ENCODE measurements at regions of chr7 and their contacts with region 1.

Region 1: DNA sequence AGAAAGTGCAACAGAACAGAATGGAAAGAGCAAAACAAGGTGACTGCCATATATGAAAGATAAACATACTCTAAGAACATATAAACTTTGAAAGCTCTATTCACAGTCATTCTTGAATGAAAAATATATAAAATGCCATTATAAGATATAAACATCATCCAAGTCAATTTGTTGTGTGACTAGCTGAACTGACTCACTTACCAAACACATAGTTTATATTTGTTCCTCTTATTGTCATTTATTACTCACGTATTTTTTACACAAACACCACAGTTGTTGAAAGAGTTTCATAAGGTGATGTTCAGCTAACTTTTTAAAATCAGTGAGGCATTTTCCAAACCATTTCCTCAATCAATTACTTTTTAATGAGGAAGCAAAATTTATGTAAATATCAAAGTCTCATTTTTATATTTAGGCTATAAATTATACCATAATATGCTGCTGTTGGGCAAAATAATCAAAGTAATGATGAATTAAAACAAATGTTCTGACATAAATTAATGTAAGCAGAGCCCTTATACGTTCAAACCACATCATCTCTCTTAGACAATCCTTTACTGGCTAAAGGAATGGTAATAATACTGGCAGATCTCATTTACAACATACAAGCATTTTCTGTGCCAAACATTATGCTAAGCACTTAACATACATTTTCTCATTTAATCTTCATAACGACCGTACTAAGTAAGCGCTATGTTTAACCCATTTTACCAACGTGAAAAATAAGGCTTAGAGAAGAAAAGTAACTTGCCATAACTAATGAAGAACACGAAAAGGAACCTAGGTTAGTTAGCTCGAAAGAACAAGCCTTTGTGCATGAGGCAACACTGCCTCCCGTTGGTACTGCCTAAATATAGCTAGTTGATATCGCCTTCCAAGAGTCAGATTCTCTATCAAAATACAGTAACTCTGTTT is 7.3 kb downstream of the LRRN3 start:
- DNase-seq: peak; percentile 10 to 11
- ATAC-seq: peak in 6 of 8 donors; percentile 52 to 74 (median 64)
- H3K4me3 ChIP-seq: no peak overlapping the region
- H3K27ac ChIP-seq: no peak overlapping the region
- H3K4me1 ChIP-seq: peaks cover 0 to 7% (median 0%) of the 10 kb centered on the region in 9 donors
- H3K27me3 ChIP-seq: no peaks in the 10 kb centered on the region
- CTCF ChIP-seq: peak; percentile 46 to 81 (median 70)

Region 2: DNA sequence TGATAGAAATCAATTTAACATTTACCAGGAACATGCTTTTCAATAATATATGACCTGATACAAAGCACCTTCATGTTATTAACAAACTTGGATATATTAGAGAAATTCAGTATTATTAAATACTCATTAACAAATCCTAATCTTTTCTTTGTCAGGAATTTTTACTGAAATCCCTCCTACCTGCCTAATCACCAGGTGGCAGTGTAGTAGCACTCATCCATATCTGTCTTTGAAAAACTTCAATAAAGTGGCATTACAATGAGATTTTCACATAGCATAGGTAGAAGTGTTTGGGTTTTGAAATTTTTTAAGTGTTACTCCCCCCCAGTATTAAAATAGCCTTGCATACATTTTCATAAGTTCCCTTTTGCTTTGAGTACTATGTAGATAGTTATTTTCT is 1253.9 kb before region 1 on chr7:
- intact Hi-C with region 1: loop called in 1 of 10 experiments (anchors 10 kb)
- DNase-seq: no peak
- ATAC-seq: no peak
- H3K4me3 ChIP-seq: no peak overlapping the region
- H3K27ac ChIP-seq: no peak overlapping the region
- H3K4me1 ChIP-seq: no peaks in the 10 kb centered on the region
- H3K27me3 ChIP-seq: no peaks in the 10 kb centered on the region
- CTCF ChIP-seq: peak in 6 of 9 donors; percentile 24 to 53 (median 34)

Region 3: DNA sequence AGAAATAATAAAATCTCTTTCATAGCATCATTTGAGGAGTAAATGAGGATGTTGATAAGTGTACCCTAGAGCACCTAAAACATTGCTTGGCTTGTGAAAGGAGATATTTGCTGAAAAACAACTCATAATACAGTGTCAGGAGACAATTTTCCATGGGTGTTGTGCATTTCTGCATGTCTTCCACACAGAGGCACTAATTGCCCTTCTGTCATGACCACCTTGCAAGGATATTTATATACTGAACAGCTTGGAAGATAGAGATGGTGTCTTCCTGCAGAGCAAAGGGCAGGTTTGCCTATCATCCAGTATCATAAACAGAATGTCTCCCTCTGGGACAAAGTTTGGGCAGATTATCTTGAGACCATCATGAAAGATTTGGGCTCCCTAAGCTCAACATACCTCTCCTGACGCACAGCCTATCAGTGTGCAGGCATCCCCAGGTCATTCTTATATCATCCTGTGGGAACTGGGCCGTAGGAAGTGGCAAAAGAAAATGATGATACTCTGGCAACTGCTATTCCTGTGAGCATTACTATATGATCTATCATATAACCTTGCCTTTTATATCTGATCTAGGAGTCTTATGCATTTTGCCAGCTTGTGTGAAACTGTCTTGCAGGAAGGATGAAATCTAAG is 502.5 kb before region 1 on chr7:
- intact Hi-C with region 1: loop called in 1 of 10 experiments (anchors 5 kb)
- DNase-seq: no peak
- ATAC-seq: no peak
- H3K4me3 ChIP-seq: no peak overlapping the region
- H3K27ac ChIP-seq: no peak overlapping the region
- H3K4me1 ChIP-seq: no peaks in the 10 kb centered on the region
- H3K27me3 ChIP-seq: no peaks in the 10 kb centered on the region
- CTCF ChIP-seq: peak in 4 of 9 donors; percentile 7 to 25 (median 13)

Region 4: GRCh38 chr7:111029574-111030251 is 68.6 kb before region 1 on chr7:
- intact Hi-C with region 1: loop called in 1 of 10 experiments (anchors 10 kb)
- DNase-seq: peak in 1 of 2 donors; percentile 21
- ATAC-seq: no peak
- H3K4me3 ChIP-seq: no peak overlapping the region
- H3K27ac ChIP-seq: no peak overlapping the region
- H3K4me1 ChIP-seq: peaks cover 0 to 16% (median 8%) of the 10 kb centered on the region in 9 donors
- H3K27me3 ChIP-seq: no peaks in the 10 kb centered on the region
- CTCF ChIP-seq: no peak

Region 5: GRCh38 chr7:111232249-111233084 is 134.2 kb after region 1 on chr7:
- intact Hi-C with region 1: no loop called
- DNase-seq: no peak
- ATAC-seq: no peak
- H3K4me3 ChIP-seq: no peak overlapping the region
- H3K27ac ChIP-seq: peak overlapping the region in 1 of 10 donors; percentile 28
- H3K4me1 ChIP-seq: peaks cover 0 to 11% (median 0%) of the 10 kb centered on the region in 9 donors
- H3K27me3 ChIP-seq: no peaks in the 10 kb centered on the region
- CTCF ChIP-seq: no peak

Region 6: GRCh38 chr7:111486472-111487142 is 388.3 kb after region 1 on chr7:
- intact Hi-C with region 1: loop called in 5 of 10 experiments (anchors 5 to 10 kb)
- DNase-seq: peak in 1 of 2 donors; percentile 13
- ATAC-seq: peak in 5 of 8 donors; percentile 41 to 69 (median 56)
- H3K4me3 ChIP-seq: no peak overlapping the region
- H3K27ac ChIP-seq: no peak overlapping the region
- H3K4me1 ChIP-seq: peaks cover 0 to 4% (median 0%) of the 10 kb centered on the region in 9 donors
- H3K27me3 ChIP-seq: no peaks in the 10 kb centered on the region
- CTCF ChIP-seq: peak; percentile 23 to 87 (median 76)

Region 7: DNA sequence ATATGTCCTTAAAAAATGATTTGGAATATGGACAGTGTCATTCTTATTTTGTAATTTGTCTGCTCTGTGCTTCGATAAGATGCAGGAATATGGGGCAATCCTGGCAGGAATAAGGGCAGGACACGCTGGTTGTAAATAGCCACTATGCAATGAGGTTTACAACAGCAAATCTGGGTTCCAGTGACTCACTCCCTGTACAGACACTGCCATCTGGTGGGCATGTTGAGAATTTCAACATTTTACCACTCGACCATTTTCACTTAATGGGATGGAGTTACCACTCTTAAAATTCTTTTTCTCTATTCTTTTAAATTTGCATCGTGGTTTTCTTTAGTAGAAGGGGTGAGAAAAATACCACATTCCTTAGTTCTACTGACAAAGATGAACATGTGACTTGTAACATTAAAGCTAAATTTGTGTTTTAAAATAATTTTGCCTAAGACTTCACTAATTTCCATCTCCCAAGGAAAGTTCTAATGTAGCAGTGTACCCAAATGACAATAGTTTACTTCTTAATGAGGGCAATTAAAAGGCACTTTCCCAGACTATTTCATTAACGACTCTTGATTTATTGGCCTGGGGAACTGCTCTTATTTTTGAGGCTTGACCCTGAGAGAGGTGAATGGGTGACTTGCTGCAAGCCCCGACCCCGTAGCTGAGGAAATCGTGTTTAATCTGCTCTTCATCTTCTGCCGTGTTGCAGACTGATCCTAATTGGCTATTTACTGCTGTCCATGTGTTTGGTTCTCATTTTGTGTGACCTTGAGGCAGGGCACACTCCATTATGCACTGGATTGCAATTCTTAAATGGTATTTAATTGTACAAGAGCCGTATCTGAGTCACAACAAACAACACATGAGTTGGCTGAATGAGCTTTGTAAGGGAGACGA is 637.6 kb after region 1 on chr7:
- intact Hi-C with region 1: loop called in 8 of 10 experiments (anchors 5 to 10 kb)
- DNase-seq: peak in 1 of 2 donors; percentile 70
- ATAC-seq: peak in 6 of 8 donors; percentile 32 to 78 (median 64)
- H3K4me3 ChIP-seq: no peak overlapping the region
- H3K27ac ChIP-seq: no peak overlapping the region
- H3K4me1 ChIP-seq: peaks cover 0 to 16% (median 11%) of the 10 kb centered on the region in 9 donors
- H3K27me3 ChIP-seq: no peaks in the 10 kb centered on the region
- CTCF ChIP-seq: peak; percentile 76 to 91 (median 89)

Measured in heart right ventricle (tissue), 16 donors.